ENCODE measurements at regions of chr14 and their contacts with region 1.

Region 1: GRCh38 chr14:93023039-93023438 is 92.7 kb downstream of the ITPK1 start:
- DNase-seq: no peak
- H3K4me3 ChIP-seq: no peak overlapping the region
- CTCF ChIP-seq: no peak

Region 2: GRCh38 chr14:92846162-92846897 is 176.7 kb before region 1 on chr14:
- in situ Hi-C with region 1: no loop called
- DNase-seq: no peak
- H3K4me3 ChIP-seq: no peak overlapping the region
- CTCF ChIP-seq: no peak

Region 3: DNA sequence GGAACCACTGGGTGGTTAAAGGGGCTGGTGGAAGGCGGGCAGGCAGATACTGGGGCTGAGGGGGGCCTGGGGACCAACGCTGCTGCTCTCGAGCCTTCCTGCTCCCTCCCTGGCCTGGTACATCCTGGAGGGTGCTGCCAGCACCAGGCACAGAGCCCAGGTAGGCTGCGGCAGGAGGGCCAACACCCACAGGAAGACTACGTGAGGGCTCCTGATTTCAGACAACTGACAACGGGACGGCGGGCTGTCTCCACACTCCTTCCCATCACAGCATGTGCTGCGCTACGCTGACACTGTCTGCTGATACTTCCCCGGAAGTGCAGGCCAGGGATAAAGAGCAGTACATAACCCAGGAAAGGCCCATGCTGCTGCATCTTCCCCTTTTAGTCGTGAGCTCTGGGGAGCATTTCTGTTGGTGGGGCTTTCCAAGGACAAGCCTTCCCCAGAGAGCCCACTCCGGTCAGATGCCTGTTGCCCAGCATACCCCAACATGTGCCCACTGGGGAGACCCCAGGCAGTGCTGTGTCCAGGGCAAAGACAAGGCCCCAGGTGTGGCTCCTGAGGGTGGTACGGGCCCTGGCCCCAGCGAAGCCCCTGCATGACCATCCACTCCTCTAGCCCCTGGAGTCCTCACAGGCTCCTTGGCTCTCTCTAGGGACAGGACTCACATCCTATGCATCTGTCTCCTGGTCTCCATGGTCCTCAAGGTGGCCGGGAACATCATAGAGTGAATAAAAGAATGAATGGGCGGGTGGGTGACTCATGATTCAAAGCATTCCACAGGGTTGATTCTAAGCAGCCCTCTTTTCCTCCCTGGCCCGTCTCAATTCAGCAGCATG is 62.1 kb before region 1 on chr14:
- in situ Hi-C with region 1: loop called (anchors 10 kb)
- DNase-seq: no peak
- H3K4me3 ChIP-seq: no peak overlapping the region
- CTCF ChIP-seq: no peak

Measured in astrocyte of the cerebellum (primary cell).